ENCODE measurements at regions of chr7 and their contacts with region 1.

Region 1: GRCh38 chr7:6536262-6537260 is 14.7 kb downstream of the GRID2IP start:
- DNase-seq: peak; percentile 100
- H3K4me3 ChIP-seq: peak overlapping the region; percentile 43 to 62
- H3K27ac ChIP-seq: no peak overlapping the region
- H3K4me1 ChIP-seq: no peaks in the 10 kb centered on the region; a peak in 1 of 4 replicates
- H3K27me3 ChIP-seq: peaks cover 10% of the 10 kb centered on the region; the same call in 1 of the 2 replicates
- CTCF ChIP-seq: no peak
- EP300 ChIP-seq: no peak
- RAD21 ChIP-seq: no peak

Region 2: DNA sequence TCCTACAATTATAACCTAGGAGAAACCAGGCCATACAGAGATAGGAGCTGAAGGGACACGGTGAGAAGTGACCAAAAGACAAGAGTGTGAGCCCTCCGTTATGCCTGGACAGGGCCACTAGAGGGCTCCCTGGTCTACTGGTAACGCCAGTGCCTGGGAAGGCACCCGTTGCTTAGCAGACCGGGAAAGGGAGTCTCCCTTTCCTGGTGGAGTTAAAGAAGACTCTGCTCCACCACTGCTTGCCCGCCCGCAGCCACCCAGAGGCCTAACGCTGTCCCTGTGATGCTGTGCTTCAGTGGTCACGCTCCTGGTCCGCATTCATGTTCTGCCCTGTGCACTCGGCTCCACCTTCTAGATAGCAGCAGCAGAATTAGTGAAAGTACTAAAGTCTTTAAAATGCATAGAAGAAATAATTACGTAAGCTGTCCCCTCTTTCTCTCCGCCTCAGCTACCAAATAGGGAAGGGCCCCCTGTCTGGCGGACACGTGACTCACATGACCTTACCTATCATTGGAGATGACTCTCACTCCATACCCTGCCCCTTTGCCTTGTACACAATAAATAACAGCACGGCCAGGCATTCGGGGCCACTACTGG is 20.1 kb before region 1 on chr7:
- CTCF ChIA-PET with region 1: interaction called, 11 read pairs
- POLR2A ChIA-PET with region 1: no interaction called
- DNase-seq: peak; percentile 85
- H3K4me3 ChIP-seq: peak overlapping the region in 1 of 2 experiments; percentile 42; a peak in 2 of 4 replicates
- H3K27ac ChIP-seq: no peak overlapping the region
- H3K4me1 ChIP-seq: peaks cover 0 to 3% of the 10 kb centered on the region in 2 experiments; a peak in 1 of 4 replicates
- H3K27me3 ChIP-seq: peaks cover 6% of the 10 kb centered on the region; the same call in 1 of the 2 replicates
- CTCF ChIP-seq: peak; percentile 89
- EP300 ChIP-seq: no peak
- RAD21 ChIP-seq: peak; percentile 87